ENCODE measurements at regions of chr14 and their contacts with region 1.

Region 1: GRCh38 chr14:51780006-51780692 is 80.3 kb upstream of the GNG2 start:
- DNase-seq: peak; percentile 88
- H3K4me3 Mint-ChIP-seq: peak overlapping the region; percentile 0
- H3K27ac Mint-ChIP-seq: no peak overlapping the region
- H3K4me1 Mint-ChIP-seq: peaks cover 42% of the 10 kb centered on the region
- H3K27me3 Mint-ChIP-seq: no peaks in the 10 kb centered on the region

Region 2: DNA sequence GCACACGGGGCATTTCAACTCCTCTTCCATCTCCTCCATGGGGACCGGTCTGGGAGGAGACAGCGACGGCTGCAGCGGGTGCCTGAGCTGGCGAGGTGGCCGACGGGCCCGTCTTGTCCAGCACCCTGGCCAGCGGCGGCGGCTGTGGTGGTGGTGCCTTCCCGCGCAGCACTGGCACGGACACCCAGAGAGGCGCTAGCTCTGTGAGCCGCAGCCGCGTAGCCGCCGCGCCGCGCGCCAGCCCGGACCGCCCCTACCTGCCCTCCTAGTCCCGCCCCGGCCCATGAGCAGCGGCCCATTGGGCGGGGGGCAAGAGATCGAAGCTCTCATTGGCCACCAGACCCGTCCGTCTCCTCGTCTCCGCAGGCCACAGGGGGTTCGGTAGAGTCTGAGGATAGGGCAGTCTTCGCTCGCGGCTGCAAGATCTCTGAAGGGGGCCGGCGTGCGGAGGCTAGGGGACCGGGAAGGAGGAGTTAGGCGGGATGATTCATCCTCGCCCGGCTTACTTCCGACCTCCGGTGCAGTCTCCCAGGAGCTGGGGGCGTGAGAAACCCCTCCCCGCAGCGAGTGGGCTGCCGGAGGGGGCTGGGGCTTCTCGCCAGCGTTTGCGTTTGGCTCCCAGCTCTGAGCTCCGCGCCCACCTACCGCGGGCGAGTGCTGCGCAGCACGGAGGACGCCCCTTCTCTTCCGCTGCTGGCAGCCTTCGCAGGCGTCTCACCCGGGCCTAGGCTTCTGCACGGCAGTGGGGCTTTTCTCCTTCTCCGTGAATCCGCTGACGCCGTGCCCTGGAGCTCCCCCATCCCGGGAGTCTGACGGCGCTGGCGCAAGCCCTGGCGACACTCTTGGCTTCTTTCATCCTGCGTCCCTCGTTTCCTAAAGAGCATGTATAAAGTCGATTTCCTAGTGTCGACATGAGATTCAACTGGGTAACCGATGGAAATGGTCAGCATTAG is 685.0 kb before region 1 on chr14 and contains the start of gene TRIM9:
- CTCF ChIA-PET with region 1: no interaction called
- intact Hi-C with region 1: loop called (anchors 2 kb)
- DNase-seq: peak; percentile 95
- H3K4me3 Mint-ChIP-seq: peak within 1 kb of the TSS; percentile 86
- H3K27ac Mint-ChIP-seq: peak within 1 kb of the TSS; percentile 65
- H3K4me1 Mint-ChIP-seq: peaks cover 12% of the 10 kb centered on the region
- H3K27me3 Mint-ChIP-seq: peaks cover 13% of the 10 kb centered on the region
- total RNA-seq, gene TRIM9: 0.76 to 1.1 TPM

Region 3: DNA sequence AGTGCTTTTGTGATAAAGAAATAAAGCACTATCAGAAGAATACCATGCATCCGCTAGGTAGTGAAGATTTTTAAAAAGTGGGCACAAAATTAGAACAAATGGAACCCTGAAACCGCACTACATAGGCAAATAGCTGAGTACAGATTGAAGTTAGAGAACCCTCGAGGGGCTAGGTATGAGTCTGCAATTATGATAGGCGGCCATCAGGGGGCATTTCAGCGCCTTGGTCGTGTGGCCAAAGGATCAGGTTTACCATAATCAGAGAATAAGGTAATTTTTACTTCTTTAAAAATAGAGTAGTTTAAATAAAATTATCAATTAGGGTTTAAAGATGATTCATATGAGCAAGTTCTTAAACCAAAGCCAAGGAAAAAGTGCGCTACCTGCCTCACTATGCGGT is 410.3 kb before region 1 on chr14:
- CTCF ChIA-PET with region 1: interaction called, 45 read pairs
- intact Hi-C with region 1: loop called (anchors 1 kb)
- DNase-seq: peak; percentile 50
- H3K4me3 Mint-ChIP-seq: no peak overlapping the region
- H3K27ac Mint-ChIP-seq: no peak overlapping the region
- H3K4me1 Mint-ChIP-seq: no peaks in the 10 kb centered on the region
- H3K27me3 Mint-ChIP-seq: peaks cover 2% of the 10 kb centered on the region

Region 4: DNA sequence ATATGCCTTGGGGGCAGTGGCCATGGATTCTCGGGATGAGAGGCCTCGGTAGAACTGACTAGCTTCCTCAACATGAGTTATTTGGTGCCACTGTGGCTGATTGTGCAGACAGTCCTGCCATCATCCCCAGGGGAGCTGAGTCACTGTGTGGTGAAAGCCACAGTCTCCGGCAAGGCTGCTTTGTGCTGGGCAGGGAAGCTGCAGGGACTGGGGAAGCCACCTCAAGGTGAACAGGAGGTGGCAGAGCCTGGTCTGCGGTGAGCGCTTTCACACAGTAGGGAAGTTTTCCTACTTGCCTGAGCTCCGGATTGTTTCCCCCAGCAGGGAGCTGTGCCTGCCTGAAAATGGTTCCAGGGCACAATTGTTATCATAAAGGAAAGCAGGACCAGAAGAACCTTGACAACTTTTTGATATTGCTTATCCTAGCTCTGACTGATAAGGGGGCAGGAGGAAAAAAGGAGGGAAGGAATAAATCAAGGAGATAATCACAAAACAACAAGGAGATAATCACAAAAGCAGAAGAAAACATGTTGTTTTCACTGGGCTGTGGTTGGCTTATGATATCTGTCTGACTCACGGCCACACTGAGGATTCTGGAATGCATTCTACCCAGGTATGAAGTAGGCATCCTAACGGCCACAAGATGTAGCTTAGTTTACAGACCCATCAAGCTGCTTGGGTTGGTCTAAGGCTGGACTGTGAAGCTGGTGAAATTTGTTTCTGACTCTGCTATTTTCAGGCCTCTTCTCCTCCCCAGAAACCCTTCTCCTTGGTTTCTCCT is 48.1 kb after region 1 on chr14:
- CTCF ChIA-PET with region 1: no interaction called
- intact Hi-C with region 1: no loop called
- DNase-seq: peak; percentile 89
- H3K4me3 Mint-ChIP-seq: no peak overlapping the region
- H3K27ac Mint-ChIP-seq: peak overlapping the region; percentile 48
- H3K4me1 Mint-ChIP-seq: no peaks in the 10 kb centered on the region
- H3K27me3 Mint-ChIP-seq: no peaks in the 10 kb centered on the region

Region 5: DNA sequence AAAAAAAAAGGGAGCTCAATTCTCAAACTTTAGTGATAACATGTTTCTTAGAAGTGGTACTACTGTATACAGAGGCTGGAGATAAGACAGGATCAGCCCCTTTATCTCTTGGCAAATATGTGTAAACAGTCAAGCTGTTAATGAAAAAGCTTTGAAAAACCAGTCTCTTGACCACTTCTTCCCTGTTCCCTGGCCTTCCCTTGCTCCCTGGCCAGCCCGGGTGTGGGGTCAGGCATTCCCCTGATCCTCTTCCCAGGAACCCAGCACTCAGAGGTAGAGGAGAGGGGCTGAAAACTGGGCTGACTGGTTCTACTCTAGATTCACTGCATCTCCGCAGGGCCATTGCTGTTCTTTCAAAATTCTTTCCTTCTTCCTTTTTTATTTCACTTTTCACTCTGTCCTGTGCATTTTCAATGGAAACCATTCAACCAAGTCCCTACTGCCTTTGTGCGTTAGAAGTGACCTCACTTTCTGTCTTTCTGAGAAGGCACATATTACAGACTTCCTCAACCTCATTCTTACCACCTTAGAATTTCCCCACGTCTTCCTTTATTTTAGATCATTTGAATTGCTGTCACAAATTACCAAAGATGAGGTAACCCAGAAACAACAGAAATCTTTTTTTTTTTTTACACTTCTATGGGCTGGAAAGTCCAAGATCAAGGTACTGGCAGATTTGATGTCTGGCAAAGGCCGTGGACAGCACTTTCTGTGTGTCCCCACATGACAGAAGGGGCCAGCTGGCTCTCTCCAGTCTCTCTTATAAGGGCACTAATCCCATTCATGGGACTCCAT is 86.0 kb after region 1 on chr14:
- CTCF ChIA-PET with region 1: interaction called, 7 read pairs
- intact Hi-C with region 1: loop called (anchors 5 kb)
- DNase-seq: no peak
- H3K4me3 Mint-ChIP-seq: no peak overlapping the region
- H3K27ac Mint-ChIP-seq: no peak overlapping the region
- H3K4me1 Mint-ChIP-seq: peaks cover 27% of the 10 kb centered on the region
- H3K27me3 Mint-ChIP-seq: no peaks in the 10 kb centered on the region

Region 6: GRCh38 chr14:51979088-51979709 is 199.1 kb after region 1 on chr14:
- CTCF ChIA-PET with region 1: interaction called, 40 read pairs
- intact Hi-C with region 1: loop called (anchors 1 kb)
- DNase-seq: peak; percentile 91
- H3K4me3 Mint-ChIP-seq: no peak overlapping the region
- H3K27ac Mint-ChIP-seq: no peak overlapping the region
- H3K4me1 Mint-ChIP-seq: peaks cover 4% of the 10 kb centered on the region
- H3K27me3 Mint-ChIP-seq: no peaks in the 10 kb centered on the region

Measured in activated naive CD4-positive, alpha-beta T cell treated with anti-CD3 and anti-CD28 coated beads for 36 hours (primary cell).